CD4-positive, alpha-beta T cell (primary cell): ENCODE measurements at regions of chr6 and their contacts with region 1.

Region 1: GRCh38 chr6:37516076-37516919 is 16.6 kb upstream of the CCDC167 start:
- DNase-seq: peak; percentile 80 to 99 (median 86)
- ATAC-seq: peak; percentile 83
- H3K4me3 ChIP-seq: peak overlapping the region; percentile 64
- H3K4me3 Mint-ChIP-seq: peak overlapping the region; percentile 83
- H3K27ac ChIP-seq: peak overlapping the region; percentile 93 to 100
- H3K27ac Mint-ChIP-seq: peak overlapping the region; percentile 97
- H3K4me1 ChIP-seq: peaks cover 94% of the 10 kb centered on the region
- H3K4me1 Mint-ChIP-seq: peaks cover 76% of the 10 kb centered on the region
- H3K27me3 ChIP-seq: no peaks in the 10 kb centered on the region
- H3K27me3 Mint-ChIP-seq: no peaks in the 10 kb centered on the region
- CTCF ChIP-seq: no peak

Region 2: GRCh38 chr6:37483917-37484785 is 32.1 kb before region 1 on chr6:
- CTCF ChIA-PET with region 1: interaction called, 3 read pairs
- POLR2A ChIA-PET with region 1: interaction called, 31 read pairs
- intact Hi-C with region 1: loop called (anchors 1 to 5 kb)
- DNase-seq: peak; percentile 62 to 89 (median 76)
- ATAC-seq: peak; percentile 65
- H3K4me3 ChIP-seq: no peak overlapping the region
- H3K4me3 Mint-ChIP-seq: no peak overlapping the region
- H3K27ac ChIP-seq: peak overlapping the region in 1 of 2 donors; percentile 50
- H3K27ac Mint-ChIP-seq: no peak overlapping the region
- H3K4me1 ChIP-seq: peaks cover 40% of the 10 kb centered on the region
- H3K4me1 Mint-ChIP-seq: peaks cover 14% of the 10 kb centered on the region
- H3K27me3 ChIP-seq: no peaks in the 10 kb centered on the region
- H3K27me3 Mint-ChIP-seq: no peaks in the 10 kb centered on the region
- CTCF ChIP-seq: peak; percentile 84

Region 3: DNA sequence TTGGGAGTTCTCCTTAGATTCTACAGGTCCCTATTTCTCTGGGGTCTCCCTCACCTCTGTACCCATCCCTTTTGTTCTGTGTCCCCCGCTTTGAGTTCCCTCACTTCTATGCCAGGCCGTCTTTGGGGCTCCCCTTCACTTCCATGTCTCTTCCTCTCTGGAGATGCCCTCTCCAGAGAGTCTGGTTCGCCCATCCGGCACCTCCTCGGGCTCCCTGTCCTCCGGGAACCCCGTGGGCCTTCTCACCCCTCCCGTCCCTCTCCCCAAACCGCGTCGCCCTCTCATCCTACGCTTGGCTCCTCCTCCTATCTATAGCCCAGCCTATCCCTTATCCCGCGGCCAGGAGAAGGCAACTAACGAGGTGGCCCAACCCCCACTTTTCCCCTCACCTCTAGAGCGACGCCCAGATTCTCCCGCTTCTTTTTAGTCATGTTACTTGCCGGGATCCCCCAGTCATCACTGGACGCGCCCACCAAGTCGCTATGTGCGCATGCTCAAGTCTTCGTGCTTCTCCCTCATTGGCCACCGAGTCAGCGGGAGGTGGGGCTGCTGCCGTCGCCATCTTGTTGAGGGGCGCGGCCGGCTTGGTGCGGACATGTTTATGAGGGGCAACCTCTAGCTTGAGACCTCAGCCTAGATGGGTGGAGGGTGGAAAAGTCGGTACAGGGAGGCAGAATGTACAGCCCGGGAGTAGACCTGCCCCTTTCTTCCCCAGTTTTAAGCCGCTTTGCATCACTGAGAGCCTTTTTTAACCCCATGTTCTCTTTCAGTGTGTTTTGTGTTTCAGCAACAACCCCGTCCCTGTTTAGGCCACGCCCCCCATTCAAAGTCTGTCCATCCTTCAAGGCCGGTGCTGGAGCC is 16.6 kb before region 1 on chr6 and contains the start of gene CCDC167:
- CTCF ChIA-PET with region 1: interaction called, 101 read pairs
- POLR2A ChIA-PET with region 1: interaction called, 330 read pairs
- intact Hi-C with region 1: loop called (anchors 1 kb)
- DNase-seq: peak; percentile 90 to 98 (median 94)
- ATAC-seq: peak; percentile 66
- H3K4me3 ChIP-seq: peak within 1 kb of the TSS; percentile 86
- H3K4me3 Mint-ChIP-seq: peak within 1 kb of the TSS; percentile 93
- H3K27ac ChIP-seq: peak within 1 kb of the TSS; percentile 77 to 81
- H3K27ac Mint-ChIP-seq: peak within 1 kb of the TSS; percentile 97
- H3K4me1 ChIP-seq: peaks cover 87% of the 10 kb centered on the region
- H3K4me1 Mint-ChIP-seq: peaks cover 79% of the 10 kb centered on the region
- H3K27me3 ChIP-seq: no peaks in the 10 kb centered on the region
- H3K27me3 Mint-ChIP-seq: no peaks in the 10 kb centered on the region
- CTCF ChIP-seq: no peak
- total RNA-seq, gene CCDC167: 7.3 to 8.0 TPM

Region 4: GRCh38 chr6:37559501-37559900 is 43.2 kb after region 1 on chr6:
- CTCF ChIA-PET with region 1: interaction called, 4 read pairs
- POLR2A ChIA-PET with region 1: interaction called, 13 read pairs
- intact Hi-C with region 1: loop called in 1 of 2 experiments (anchors 5 kb)
- DNase-seq: peak in 2 of 14 experiments; percentile 14 to 30
- ATAC-seq: peak; percentile 46
- H3K4me3 ChIP-seq: no peak overlapping the region
- H3K4me3 Mint-ChIP-seq: no peak overlapping the region
- H3K27ac ChIP-seq: no peak overlapping the region
- H3K27ac Mint-ChIP-seq: peak overlapping the region; percentile 45
- H3K4me1 ChIP-seq: peaks cover 21% of the 10 kb centered on the region
- H3K4me1 Mint-ChIP-seq: peaks cover 39% of the 10 kb centered on the region
- H3K27me3 ChIP-seq: no peaks in the 10 kb centered on the region
- H3K27me3 Mint-ChIP-seq: no peaks in the 10 kb centered on the region
- CTCF ChIP-seq: no peak